Heart right ventricle (tissue), 16 donors: ENCODE measurements at regions of chr5 and their contacts with region 1.

Region 1: GRCh38 chr5:65481635-65482295 is at the start of gene ADAMTS6:
- DNase-seq: peak; percentile 87 to 95
- ATAC-seq: peak; percentile 93 to 97 (median 96)
- H3K4me3 ChIP-seq: peak within 1 kb of the TSS; percentile 44 to 73 (median 60)
- H3K27ac ChIP-seq: peak within 1 kb of the TSS; percentile 55 to 95 (median 88)
- H3K4me1 ChIP-seq: peaks cover 0 to 23% (median 14%) of the 10 kb centered on the region in 9 donors
- H3K27me3 ChIP-seq: no peaks in the 10 kb centered on the region
- CTCF ChIP-seq: no peak
- total RNA-seq, gene ADAMTS6: 0.85 to 4.1 (median 2.7) TPM

Region 2: GRCh38 chr5:64634997-64635686 is 846.6 kb before region 1 on chr5:
- intact Hi-C with region 1: loop called in 7 of 10 experiments (anchors 5 to 10 kb)
- DNase-seq: no peak
- ATAC-seq: no peak
- H3K4me3 ChIP-seq: no peak overlapping the region
- H3K27ac ChIP-seq: no peak overlapping the region
- H3K4me1 ChIP-seq: peaks cover 0 to 6% (median 0%) of the 10 kb centered on the region in 9 donors
- H3K27me3 ChIP-seq: peaks cover 0 to 36% (median 0%) of the 10 kb centered on the region in 7 donors
- CTCF ChIP-seq: peak; percentile 60 to 86 (median 83)

Region 3: DNA sequence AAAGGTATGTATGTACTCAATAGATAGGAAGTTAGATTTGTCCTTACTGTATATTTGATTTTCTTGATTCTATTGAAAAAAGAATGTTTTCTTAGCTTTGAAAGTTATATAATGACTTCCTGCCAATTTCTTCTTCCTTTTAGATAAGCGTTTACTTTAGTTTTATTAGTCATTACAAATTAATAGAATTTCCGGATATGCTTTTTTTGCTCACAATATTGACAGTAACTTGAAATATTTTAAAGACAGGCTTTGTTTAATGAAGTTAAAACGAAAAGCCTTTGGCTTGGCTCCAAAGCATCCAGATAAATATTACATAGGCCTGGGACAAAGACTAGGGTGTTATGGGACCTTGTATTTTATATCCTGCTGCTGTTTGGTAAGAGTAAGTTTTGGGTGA is 663.5 kb before region 1 on chr5:
- intact Hi-C with region 1: loop called in 4 of 10 experiments (anchors 5 to 10 kb)
- DNase-seq: no peak
- ATAC-seq: no peak
- H3K4me3 ChIP-seq: no peak overlapping the region
- H3K27ac ChIP-seq: peak overlapping the region in 2 of 10 donors; percentile 3 to 45
- H3K4me1 ChIP-seq: peaks cover 0 to 48% (median 20%) of the 10 kb centered on the region in 9 donors
- H3K27me3 ChIP-seq: no peaks in the 10 kb centered on the region
- CTCF ChIP-seq: no peak

Region 4: DNA sequence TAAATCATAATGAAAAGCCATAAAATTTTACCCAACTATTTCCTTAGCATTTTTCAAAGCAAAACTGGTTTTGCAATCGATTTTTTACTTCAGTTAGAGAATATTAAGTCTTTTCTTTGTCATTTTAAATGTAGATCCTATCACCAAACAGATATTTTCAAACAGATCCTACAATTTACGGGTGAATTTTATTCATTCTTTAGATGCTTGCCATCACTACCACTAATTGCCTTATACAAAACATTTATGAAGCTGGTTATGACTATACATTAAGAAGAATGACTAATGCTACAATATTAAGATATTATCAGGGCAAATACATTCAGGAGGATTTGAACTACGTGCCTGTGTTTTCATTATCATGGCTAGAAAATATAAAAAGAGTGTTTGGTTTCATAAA is 516.2 kb before region 1 on chr5:
- intact Hi-C with region 1: loop called in 4 of 10 experiments (anchors 2 to 10 kb)
- DNase-seq: no peak
- ATAC-seq: no peak
- H3K4me3 ChIP-seq: no peak overlapping the region
- H3K27ac ChIP-seq: no peak overlapping the region
- H3K4me1 ChIP-seq: no peaks in the 10 kb centered on the region
- H3K27me3 ChIP-seq: no peaks in the 10 kb centered on the region
- CTCF ChIP-seq: no peak

Region 5: DNA sequence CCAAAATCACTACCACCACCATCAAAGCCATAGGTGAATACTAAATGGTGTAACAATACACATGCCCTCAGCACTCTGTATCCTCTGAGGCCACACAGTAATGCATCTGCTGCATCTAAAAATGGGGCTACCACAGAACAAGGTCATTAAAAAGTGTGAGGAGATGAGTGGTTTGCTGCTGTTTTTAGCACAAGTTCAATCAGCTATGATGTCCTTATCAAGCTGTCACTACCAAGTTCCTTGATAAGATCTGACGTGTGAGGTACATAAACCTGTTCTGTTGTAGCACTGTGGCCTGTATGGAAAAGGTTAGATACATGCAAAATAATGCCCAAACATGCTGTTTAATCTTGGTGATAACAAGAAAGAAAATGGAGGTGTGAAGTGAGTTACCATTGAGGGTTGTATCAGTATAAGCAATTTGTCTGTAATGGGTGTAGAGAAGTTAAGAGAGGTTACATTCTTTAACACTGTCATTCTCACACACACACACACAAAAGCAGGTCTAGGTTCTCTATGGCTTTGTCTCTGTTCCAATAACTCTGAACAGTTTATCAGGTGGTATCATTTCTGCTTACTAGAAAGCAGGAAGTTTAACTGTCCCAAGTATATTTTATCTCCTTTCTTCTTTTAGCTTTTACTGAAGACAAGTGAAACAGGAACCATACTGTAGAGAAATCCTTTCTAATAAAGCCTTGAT is 460.1 kb before region 1 on chr5:
- intact Hi-C with region 1: loop called in 1 of 10 experiments (anchors 5 kb)
- DNase-seq: no peak
- ATAC-seq: peak; percentile 76 to 97 (median 87)
- H3K4me3 ChIP-seq: no peak overlapping the region
- H3K27ac ChIP-seq: peak overlapping the region in 5 of 10 donors; percentile 2 to 58 (median 41)
- H3K4me1 ChIP-seq: peaks cover 0 to 29% (median 13%) of the 10 kb centered on the region in 9 donors
- H3K27me3 ChIP-seq: no peaks in the 10 kb centered on the region
- CTCF ChIP-seq: no peak

Region 6: DNA sequence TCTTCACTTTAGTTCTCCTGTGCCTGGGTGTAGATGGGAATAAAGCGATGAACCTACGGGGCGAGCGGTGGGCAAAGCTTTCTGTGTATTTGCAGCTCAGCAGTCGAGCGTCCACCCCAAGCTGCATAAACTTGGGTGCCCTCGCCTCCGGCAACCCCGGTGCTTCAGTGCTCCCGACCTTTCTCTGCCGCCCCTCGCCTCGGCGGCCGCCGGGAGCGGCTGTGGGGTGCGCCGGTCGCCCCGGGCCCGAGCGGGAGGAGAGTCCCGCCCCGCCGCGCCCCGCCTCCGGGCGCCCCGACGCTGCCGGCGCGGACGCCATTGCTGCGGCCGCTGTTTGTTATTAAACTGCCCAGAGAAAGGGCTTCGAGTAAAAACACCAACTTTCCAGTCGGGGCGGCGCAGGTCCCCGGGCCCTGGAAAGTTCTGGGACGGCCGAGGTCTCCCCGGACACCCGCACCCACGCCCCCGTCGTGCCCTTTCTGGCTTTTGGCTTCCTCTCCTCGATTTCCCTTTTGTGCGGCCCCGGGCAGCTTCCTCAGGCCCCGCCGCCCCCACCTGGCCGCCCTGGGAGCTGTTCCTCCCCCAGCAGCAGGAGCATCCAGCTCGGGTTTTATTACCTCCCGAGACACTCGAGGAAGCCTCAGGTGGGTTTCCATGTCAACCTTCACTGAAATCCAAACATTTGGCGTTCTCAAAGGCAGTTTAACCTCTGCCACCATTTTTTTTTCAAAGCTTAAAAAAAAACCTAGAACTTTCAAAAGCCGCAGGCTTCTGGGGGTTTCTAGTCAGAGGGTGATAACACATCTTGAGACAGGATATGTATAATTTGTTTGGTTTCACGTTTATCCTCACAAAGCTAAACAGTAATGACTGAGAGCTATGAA is 378.7 kb before region 1 on chr5:
- intact Hi-C with region 1: loop called (anchors 1 to 10 kb)
- DNase-seq: peak; percentile 68 to 72
- ATAC-seq: peak; percentile 85 to 92 (median 88)
- H3K4me3 ChIP-seq: peak overlapping the region; percentile 49 to 76 (median 66)
- H3K27ac ChIP-seq: peak overlapping the region; percentile 69 to 96 (median 92)
- H3K4me1 ChIP-seq: peaks cover 0 to 21% (median 15%) of the 10 kb centered on the region in 9 donors
- H3K27me3 ChIP-seq: no peaks in the 10 kb centered on the region
- CTCF ChIP-seq: peak in 8 of 9 donors; percentile 32 to 67 (median 50)